Activated B cell treated with CpG ODN at 0.5 μM for 24 hours (primary cell): ENCODE measurements at regions of chr9 and their contacts with region 1.

Region 1: DNA sequence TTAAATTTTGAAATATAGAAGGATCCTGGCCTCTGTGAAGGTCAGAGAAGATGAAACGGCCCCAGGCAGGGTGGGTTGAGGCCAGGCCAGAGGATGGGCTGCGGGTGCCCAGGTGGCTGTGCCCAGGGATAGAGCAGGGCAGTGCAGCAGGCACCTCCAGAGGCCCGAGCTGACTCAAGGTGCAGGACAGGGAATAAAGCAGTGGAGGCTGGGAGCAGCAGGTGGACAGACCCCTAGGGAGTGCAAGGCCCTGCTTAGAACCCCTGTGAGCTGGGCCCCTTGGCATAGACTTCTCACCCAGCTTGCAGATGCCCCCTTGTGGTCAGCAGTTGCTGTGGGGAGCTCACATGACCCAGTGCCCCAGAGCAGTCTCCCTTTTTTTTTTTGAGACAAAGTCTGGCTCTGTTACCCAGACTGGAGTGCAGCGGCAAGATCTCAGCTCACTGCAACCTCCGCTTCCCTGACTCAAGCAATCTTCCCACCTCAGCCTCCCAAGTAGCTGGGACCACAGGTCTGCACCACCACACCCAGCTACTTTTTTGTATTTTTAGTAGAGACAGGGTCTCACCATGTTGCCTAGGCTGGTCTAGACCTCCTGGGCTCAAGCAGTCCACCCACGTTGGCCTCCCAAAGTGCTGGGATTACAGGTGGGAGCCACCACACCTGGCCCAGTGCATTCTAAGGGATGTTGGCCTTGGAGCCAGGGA is 118.8 kb downstream of the WNK2 start:
- DNase-seq: peak; percentile 44
- ATAC-seq: peak; percentile 94
- H3K4me3 Mint-ChIP-seq: no peak overlapping the region
- H3K27ac Mint-ChIP-seq: no peak overlapping the region
- H3K4me1 Mint-ChIP-seq: no peaks in the 10 kb centered on the region
- H3K27me3 Mint-ChIP-seq: peaks cover 4% of the 10 kb centered on the region
- CTCF ChIP-seq: no peak

Region 2: DNA sequence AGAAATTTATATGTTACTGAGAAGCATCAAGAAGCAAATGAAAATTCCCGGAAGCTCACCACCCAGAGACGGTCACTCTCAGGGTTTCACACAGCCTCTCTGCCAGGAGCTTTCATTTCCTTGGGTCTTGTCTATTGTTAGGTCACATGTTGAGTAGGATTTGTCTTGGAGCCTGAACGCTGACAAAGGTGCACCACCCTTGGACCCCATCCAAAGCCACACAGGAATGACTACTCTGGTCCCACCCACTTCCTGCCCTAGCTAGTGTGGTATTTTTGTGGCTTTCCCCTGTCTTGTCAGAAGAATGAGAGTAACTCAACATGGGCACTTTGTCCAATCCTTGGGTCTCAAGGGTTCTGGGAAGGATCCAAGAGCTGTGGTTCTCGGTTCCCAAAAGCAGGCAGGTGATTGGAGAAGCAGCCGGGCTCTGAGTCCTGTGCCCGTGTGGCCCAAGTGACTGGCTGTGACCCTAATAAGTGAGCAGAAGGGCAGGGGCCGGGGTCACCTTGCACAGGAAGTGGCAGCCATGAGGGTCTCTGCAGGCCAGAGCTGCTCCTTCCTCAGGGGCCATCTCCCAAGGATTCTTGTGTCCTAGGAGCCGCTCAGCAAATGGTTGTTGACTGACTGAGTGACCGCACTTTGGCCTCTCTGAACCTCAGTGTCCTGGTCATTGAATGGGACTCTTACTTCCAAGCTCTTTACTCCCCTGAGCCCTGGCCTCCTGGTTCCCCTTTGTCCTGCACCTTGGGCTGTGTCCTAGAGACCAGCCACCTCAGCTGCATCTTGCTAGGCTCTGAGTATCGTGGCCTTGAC is 348.4 kb before region 1 on chr9:
- CTCF ChIA-PET with region 1: interaction called, 9 read pairs
- POLR2A ChIA-PET with region 1: no interaction called
- intact Hi-C with region 1: loop called (anchors 1 kb)
- DNase-seq: no peak
- ATAC-seq: peak; percentile 66
- H3K4me3 Mint-ChIP-seq: peak overlapping the region; percentile 49
- H3K27ac Mint-ChIP-seq: no peak overlapping the region
- H3K4me1 Mint-ChIP-seq: peaks cover 20% of the 10 kb centered on the region
- H3K27me3 Mint-ChIP-seq: peaks cover 17% of the 10 kb centered on the region
- CTCF ChIP-seq: no peak

Region 3: DNA sequence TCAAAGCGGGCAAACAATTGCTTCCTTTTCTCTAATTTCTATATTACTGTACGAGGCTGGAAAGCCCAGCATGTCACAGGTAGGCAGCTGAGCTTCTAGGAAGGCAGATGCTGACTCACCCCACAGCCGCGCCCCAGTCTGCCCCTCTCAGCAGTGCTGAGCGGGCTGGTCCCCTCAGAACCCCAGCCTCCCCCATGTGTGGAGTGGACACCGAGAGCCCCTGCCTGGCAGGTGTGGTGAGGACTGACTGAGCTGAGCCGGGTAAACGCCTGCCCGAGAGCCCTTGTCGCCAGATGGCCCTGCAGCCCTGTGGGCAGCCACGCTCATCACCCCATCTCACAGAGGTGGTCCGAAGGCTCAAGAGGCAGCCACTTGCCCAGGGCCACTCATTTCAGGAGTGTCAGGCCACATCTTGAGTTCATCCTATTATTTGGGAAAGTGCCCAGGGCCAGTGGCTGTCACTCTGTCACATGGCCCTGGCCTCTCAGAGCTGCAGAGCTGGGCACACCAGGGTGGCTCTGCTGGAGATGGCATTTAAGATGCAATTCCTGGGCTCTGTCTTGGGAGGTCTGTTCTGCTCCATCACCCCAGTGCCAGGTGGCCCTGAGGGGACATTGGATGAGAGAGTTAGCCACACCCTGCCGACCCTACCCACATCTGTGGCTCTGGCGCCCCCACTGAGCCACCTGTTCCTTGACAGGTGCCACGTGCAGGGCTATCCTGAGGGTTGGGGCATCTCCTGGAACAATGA is 194.2 kb before region 1 on chr9:
- CTCF ChIA-PET with region 1: interaction called, 19 read pairs
- POLR2A ChIA-PET with region 1: no interaction called
- intact Hi-C with region 1: no loop called
- DNase-seq: no peak
- ATAC-seq: peak; percentile 56
- H3K4me3 Mint-ChIP-seq: no peak overlapping the region
- H3K27ac Mint-ChIP-seq: no peak overlapping the region
- H3K4me1 Mint-ChIP-seq: peaks cover 28% of the 10 kb centered on the region
- H3K27me3 Mint-ChIP-seq: no peaks in the 10 kb centered on the region
- CTCF ChIP-seq: no peak

Region 4: GRCh38 chr9:93159601-93160471 is 142.9 kb before region 1 on chr9:
- CTCF ChIA-PET with region 1: interaction called, 13 read pairs
- POLR2A ChIA-PET with region 1: no interaction called
- intact Hi-C with region 1: loop called (anchors 1 kb)
- DNase-seq: peak; percentile 70
- ATAC-seq: peak; percentile 98
- H3K4me3 Mint-ChIP-seq: no peak overlapping the region
- H3K27ac Mint-ChIP-seq: no peak overlapping the region
- H3K4me1 Mint-ChIP-seq: peaks cover 7% of the 10 kb centered on the region
- H3K27me3 Mint-ChIP-seq: no peaks in the 10 kb centered on the region
- CTCF ChIP-seq: peak; percentile 88